ENCODE measurements at regions of chr1 and their contacts with region 1.

Region 1: GRCh38 chr1:183234660-183235476 is 48.8 kb downstream of the LAMC2 start:
- DNase-seq: peak; percentile 93
- H3K4me3 ChIP-seq: peak overlapping the region; percentile 56
- CTCF ChIP-seq: peak; percentile 64

Region 2: GRCh38 chr1:181726320-181727007 is 1508.4 kb before region 1 on chr1:
- CTCF ChIA-PET with region 1: no interaction called
- POLR2A ChIA-PET with region 1: no interaction called
- DNase-seq: no peak
- H3K4me3 ChIP-seq: no peak overlapping the region
- CTCF ChIP-seq: no peak

Region 3: DNA sequence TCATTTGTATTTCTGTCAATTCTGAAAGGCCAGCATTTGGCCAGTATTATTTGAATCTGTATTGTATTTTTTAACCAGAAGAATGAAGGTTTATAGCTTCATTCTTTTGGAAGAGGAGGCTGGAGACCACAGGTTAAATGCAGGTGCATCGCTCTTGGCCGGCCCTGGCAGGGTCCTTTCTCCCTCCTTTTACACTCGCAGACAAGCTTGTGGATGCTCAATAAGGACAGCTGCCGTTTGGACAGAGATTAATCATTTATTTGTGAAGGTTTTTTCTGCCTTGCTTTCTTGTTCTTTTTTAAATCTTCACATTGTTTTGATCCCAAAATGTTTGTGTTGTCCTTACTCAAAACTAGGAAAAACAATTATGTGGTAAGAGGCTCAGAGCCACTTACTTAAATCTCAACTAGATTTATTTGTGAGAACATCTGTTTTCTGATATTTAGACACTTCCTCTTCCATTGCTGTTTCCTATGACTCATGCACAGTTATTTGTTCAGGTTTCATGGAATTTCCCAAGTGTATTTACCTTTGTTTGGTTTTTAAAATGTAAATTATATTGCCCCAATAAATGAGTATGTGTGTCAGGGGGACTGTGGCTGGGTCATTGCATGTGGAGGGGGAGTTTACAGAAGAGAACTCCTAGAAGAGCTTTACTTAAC is 95.5 kb before region 1 on chr1:
- CTCF ChIA-PET with region 1: interaction called, 13 read pairs
- POLR2A ChIA-PET with region 1: no interaction called
- DNase-seq: no peak
- H3K4me3 ChIP-seq: no peak overlapping the region
- CTCF ChIP-seq: no peak

Region 4: DNA sequence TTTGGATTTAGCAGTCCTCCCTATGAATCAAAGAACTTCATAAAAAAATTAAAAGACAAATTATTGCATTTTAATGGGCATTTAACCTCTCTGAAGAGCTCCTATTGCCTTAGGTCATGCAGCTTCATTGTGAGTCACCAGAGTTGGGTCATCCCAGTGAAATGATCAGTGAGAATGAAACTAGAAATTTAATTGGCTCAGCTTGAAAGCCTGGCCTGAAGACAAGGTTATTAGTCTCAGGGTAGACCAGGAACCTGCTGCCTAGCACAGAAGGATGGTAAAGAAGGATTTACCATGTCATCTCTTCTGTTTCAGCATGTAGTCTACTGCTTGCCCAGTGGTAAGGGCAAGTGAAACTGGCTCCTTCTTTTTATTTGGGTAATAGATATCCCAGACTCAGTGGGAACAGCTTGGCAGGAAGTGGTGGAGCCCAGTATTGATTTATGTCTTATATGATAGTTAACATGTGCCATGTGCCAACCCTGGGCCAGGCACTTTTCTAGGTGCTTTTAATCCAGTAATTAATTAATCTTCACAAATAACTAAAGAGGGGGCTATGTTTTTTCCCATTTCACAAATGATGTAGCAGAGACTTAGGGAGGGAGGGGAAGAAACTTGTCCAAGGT is 25.2 kb before region 1 on chr1:
- CTCF ChIA-PET with region 1: interaction called, 63 read pairs
- POLR2A ChIA-PET with region 1: no interaction called
- DNase-seq: peak; percentile 47
- H3K4me3 ChIP-seq: no peak overlapping the region
- CTCF ChIP-seq: no peak

Region 5: GRCh38 chr1:183218971-183219615 is 15.8 kb before region 1 on chr1:
- CTCF ChIA-PET with region 1: interaction called, 58 read pairs
- POLR2A ChIA-PET with region 1: no interaction called
- DNase-seq: no peak
- H3K4me3 ChIP-seq: no peak overlapping the region
- CTCF ChIP-seq: no peak

Region 6: GRCh38 chr1:183251101-183251958 is 16.5 kb after region 1 on chr1:
- CTCF ChIA-PET with region 1: interaction called, 36 read pairs
- POLR2A ChIA-PET with region 1: no interaction called
- DNase-seq: no peak
- H3K4me3 ChIP-seq: no peak overlapping the region
- CTCF ChIP-seq: no peak

Region 7: GRCh38 chr1:183281553-183282091 is 46.8 kb after region 1 on chr1:
- CTCF ChIA-PET with region 1: interaction called, 23 read pairs
- POLR2A ChIA-PET with region 1: interaction called, 5 read pairs
- DNase-seq: no peak
- H3K4me3 ChIP-seq: no peak overlapping the region
- CTCF ChIP-seq: peak; percentile 93